A673 (cell line): ENCODE measurements at regions of chr6 and their contacts with region 1.

Region 1: DNA sequence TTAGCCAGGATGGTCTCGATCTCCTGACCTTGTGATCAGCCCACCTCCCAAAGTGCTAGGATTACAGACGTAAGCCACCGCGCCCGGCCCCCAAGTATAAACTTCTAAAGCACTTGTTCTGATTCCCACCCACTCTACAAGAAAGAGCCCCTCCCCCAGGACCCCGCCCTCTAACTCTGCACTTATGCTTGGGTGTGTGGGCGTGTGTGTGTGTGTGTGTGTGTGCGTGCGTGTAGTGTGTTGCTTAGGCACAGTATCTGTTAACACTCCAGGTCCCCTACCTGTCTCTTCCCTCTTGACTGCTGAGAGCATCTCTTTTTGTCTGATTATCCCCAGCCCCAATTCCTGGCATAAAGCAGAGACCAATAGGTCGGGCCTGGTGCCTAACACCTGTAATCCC is 6.0 kb upstream of the PTCRA start:
- DNase-seq: no peak
- H3K4me3 ChIP-seq: no peak overlapping the region
- H3K27ac ChIP-seq: no peak overlapping the region
- H3K4me1 ChIP-seq: no peaks in the 10 kb centered on the region
- H3K27me3 ChIP-seq: no peaks in the 10 kb centered on the region
- CTCF ChIP-seq: no peak

Region 2: GRCh38 chr6:42947950-42948349 is 38.1 kb after region 1 on chr6:
- CTCF ChIA-PET with region 1: no interaction called
- POLR2A ChIA-PET with region 1: interaction called, 11 read pairs
- intact Hi-C with region 1: no loop called
- DNase-seq: no peak
- H3K4me3 ChIP-seq: no peak overlapping the region
- H3K27ac ChIP-seq: no peak overlapping the region
- H3K4me1 ChIP-seq: no peaks in the 10 kb centered on the region
- H3K27me3 ChIP-seq: no peaks in the 10 kb centered on the region
- CTCF ChIP-seq: no peak

Region 3: DNA sequence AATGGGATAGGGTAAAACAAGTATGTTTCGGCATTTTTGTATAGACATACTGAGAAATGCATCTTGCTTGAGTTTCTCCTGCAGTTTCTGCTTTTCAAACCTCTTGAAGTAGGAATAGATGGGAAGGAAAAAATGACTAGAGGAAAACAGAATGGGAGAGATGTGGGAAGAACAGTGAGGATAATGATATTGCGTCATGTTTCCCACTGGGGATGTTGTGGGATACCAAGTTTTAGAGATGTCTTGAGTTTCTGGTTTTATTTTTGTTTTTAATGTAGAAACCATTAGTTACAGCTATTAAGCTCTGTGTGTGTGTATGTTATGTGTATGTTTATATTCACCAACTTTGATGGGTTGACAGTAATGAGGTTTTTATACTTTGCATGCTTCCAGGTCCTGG is 690.8 kb after region 1 on chr6:
- CTCF ChIA-PET with region 1: no interaction called
- POLR2A ChIA-PET with region 1: interaction called, 10 read pairs
- intact Hi-C with region 1: no loop called
- DNase-seq: no peak
- H3K4me3 ChIP-seq: no peak overlapping the region
- H3K27ac ChIP-seq: no peak overlapping the region
- H3K4me1 ChIP-seq: no peaks in the 10 kb centered on the region
- H3K27me3 ChIP-seq: no peaks in the 10 kb centered on the region
- CTCF ChIP-seq: no peak